Motor neuron (in vitro differentiated cells): ENCODE measurements at regions of chr6 and their contacts with region 1.

Region 1: DNA sequence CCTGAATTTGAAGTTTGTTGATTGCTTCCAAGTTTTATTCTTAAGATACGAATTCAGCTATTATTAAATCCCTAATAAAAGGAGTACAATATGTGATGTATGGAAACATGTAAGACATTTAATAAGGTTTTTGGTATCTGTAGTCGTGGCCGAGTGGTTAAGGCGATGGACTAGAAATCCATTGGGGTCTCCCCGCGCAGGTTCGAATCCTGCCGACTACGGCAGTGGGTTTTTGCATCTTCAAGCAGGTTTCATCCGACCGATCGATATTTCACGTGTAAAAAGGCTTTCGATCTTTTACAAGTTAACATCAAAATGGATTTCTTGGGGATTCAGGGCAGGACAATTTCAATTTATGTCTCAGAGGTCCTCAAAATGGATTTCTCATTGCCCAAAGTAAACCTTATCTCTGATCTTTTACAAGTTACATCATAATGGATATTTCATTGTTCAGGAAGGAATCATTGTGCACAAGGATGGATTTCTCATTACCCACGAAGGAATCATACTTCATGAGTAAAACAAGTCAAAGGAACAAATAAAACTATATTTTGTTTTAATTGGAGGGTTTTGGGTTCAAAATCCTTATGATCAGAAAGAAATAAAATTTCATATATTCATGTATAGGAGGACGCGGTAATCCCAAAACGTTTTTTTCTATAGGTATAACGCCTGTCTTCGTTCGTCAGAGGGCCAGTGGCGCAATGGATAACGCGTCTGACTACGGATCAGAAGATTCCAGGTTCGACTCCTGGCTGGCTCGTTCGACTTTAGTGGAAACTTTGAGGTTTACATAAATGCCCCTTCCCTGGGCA is 37.3 kb upstream of the BTN3A2 start:
- ATAC-seq: peak; percentile 21 to 70 (median 62)
- H3K4me3 ChIP-seq: peak overlapping the region; percentile 35 to 53 (median 44)
- H3K27ac ChIP-seq: peak overlapping the region in 1 of 2 donors; percentile 55
- H3K4me1 ChIP-seq: peaks cover 2 to 5% of the 10 kb centered on the region in 2 donors

Region 2: GRCh38 chr6:25992413-25993037 is 335.1 kb before region 1 on chr6:
- in situ Hi-C with region 1: no loop called
- ATAC-seq: peak; percentile 75 to 97 (median 94)
- H3K4me3 ChIP-seq: peak overlapping the region; percentile 36 to 48 (median 39)
- H3K27ac ChIP-seq: peak overlapping the region in 1 of 2 donors; percentile 50
- H3K4me1 ChIP-seq: peaks cover 6 to 7% of the 10 kb centered on the region in 2 donors

Region 3: GRCh38 chr6:26537846-26538571 is 210.4 kb after region 1 on chr6 and contains the start of gene HMGN4:
- in situ Hi-C with region 1: loop called in 4 of 9 experiments (anchors 25 kb)
- ATAC-seq: peak; percentile 74 to 81 (median 78)
- H3K4me3 ChIP-seq: peak within 1 kb of the TSS; percentile 55 to 75 (median 66)
- H3K27ac ChIP-seq: peak within 1 kb of the TSS; percentile 89 to 97
- H3K4me1 ChIP-seq: peaks cover 24% of the 10 kb centered on the region in 2 donors
- total RNA-seq, gene HMGN4: 40.7 to 72.7 (median 55.0) TPM

Region 4: DNA sequence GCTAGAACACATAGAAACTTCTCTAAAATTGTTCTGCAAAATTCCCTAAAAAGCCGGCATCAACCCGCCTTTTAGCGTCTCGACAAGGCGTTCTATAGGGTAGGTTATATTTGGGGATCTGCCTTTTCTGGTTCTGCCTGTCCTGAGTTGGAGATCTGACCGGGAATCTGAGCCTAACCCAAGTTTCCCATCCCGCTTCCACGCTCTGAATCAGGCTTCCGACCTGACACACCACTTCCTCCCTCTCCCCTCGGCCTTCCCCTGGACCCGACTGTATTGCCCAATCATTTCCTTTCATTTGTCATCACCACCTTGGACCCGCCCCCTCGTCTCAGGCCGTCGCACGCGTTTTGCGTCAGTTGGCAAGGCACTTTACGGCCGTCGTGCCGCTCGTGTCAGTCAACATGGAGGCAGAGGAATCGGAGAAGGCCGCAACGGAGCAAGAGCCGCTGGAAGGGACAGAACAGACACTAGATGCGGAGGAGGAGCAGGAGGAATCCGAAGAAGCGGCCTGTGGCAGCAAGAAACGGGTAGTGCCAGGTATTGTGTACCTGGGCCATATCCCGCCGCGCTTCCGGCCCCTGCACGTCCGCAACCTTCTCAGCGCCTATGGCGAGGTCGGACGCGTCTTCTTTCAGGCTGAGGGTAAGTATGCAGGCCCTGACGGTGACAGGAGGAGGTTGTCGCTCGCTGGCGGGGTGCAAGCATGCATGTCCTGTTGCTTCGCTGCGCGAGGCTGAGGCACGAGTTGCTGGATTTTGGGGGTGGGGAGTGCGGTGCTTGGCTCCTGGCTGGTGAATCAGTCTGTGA is 269.1 kb after region 1 on chr6 and contains the start of gene ABT1:
- in situ Hi-C with region 1: loop called in 1 of 9 experiments (anchors 25 kb)
- ATAC-seq: peak; percentile 75 to 88 (median 83)
- H3K4me3 ChIP-seq: peak within 1 kb of the TSS; percentile 65 to 90 (median 72)
- H3K27ac ChIP-seq: peak within 1 kb of the TSS; percentile 73 to 82
- H3K4me1 ChIP-seq: peaks cover 0 to 4% of the 10 kb centered on the region in 2 donors
- total RNA-seq, gene ABT1: 11.7 to 23.1 (median 16.5) TPM

Region 5: DNA sequence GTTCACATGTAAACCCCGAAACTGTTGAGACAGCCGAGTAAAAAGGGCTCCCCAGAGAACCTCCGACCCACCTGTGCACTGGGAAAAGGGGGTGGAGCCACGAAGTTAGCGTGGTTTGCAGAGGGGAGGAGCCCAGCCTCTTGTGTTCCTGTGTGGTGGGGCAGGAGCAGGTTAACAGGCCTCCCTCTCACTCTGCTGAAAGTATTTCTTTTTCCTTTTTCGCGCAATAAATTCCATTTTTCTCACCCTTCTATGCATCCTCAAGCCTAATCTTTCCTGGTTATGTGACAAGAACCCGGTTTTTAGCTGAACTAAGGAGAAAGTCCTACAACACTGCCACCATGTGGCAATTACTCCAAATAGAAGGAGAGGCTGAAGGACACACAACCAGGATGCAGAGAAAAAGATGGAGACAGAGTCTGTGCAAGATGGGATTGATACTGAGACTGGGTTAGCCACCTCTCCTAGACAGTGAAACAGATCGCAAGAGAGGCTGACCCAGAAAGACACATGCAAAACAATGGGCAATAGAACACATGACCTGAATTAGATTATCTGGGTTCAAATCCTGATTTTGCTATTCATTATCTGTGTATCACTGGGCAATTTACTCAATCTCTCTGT is 751.2 kb after region 1 on chr6:
- in situ Hi-C with region 1: loop called in 1 of 9 experiments (anchors 25 kb)
- ATAC-seq: peak; percentile 42 to 99 (median 86)
- H3K4me3 ChIP-seq: peak overlapping the region; percentile 19 to 33 (median 25)
- H3K27ac ChIP-seq: no peak overlapping the region
- H3K4me1 ChIP-seq: no peaks in the 10 kb centered on the region

Region 6: DNA sequence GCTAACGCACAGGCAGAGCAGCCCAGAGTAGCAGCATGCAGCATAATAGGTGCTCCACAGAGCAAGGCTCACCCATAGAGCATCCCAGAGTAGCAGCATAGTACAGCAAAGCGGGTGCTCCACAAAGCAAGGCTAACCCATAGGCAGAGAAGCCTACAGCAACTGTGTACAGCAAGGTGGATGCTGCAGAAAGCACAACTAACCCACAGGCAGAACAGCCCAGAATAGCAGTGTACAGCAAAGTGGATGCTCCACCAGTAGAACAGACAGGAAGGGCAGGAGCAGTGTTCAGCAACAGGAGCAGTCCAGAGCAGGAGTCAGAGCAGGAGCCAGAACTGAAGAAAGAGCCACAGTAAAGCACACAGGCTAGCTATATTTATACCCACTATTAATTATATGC is 787.1 kb after region 1 on chr6:
- in situ Hi-C with region 1: loop called in 1 of 9 experiments (anchors 25 kb)
- ATAC-seq: peak in 4 of 8 experiments; percentile 51 to 71 (median 65)
- H3K4me3 ChIP-seq: no peak overlapping the region
- H3K27ac ChIP-seq: no peak overlapping the region
- H3K4me1 ChIP-seq: no peaks in the 10 kb centered on the region